ENCODE measurements at regions of chr17 and their contacts with region 1.

Region 1: GRCh38 chr17:41548844-41549595 is 20.9 kb upstream of the KRT19 start:
- DNase-seq: peak; percentile 91
- ATAC-seq: peak; percentile 89
- H3K4me3 Mint-ChIP-seq: peak overlapping the region; percentile 47; the same call in 1 of the 2 replicates
- H3K27ac Mint-ChIP-seq: 0 out of 2 replicates have a peak overlapping the region, but pooled peaks have one; percentile 65
- H3K4me1 Mint-ChIP-seq: peaks cover 26% of the 10 kb centered on the region
- H3K27me3 Mint-ChIP-seq: peaks cover 5% of the 10 kb centered on the region
- CTCF ChIP-seq: peak; percentile 80

Region 2: GRCh38 chr17:40763752-40764151 is 785.3 kb before region 1 on chr17:
- CTCF ChIA-PET with region 1: no interaction called
- POLR2A ChIA-PET with region 1: no interaction called
- DNase-seq: no peak
- ATAC-seq: no peak
- H3K4me3 Mint-ChIP-seq: no peak overlapping the region
- H3K27ac Mint-ChIP-seq: no peak overlapping the region
- H3K4me1 Mint-ChIP-seq: no peaks in the 10 kb centered on the region
- H3K27me3 Mint-ChIP-seq: peaks cover 3% of the 10 kb centered on the region; the same call in 1 of the 2 replicates
- CTCF ChIP-seq: no peak

Region 3: GRCh38 chr17:41403798-41404671 is 145.0 kb before region 1 on chr17:
- CTCF ChIA-PET with region 1: interaction called, 17 read pairs
- POLR2A ChIA-PET with region 1: no interaction called
- DNase-seq: no peak
- ATAC-seq: no peak
- H3K4me3 Mint-ChIP-seq: no peak overlapping the region
- H3K27ac Mint-ChIP-seq: no peak overlapping the region
- H3K4me1 Mint-ChIP-seq: no peaks in the 10 kb centered on the region
- H3K27me3 Mint-ChIP-seq: no peaks in the 10 kb centered on the region; the same call in none of the 2 replicates
- CTCF ChIP-seq: no peak

Region 4: DNA sequence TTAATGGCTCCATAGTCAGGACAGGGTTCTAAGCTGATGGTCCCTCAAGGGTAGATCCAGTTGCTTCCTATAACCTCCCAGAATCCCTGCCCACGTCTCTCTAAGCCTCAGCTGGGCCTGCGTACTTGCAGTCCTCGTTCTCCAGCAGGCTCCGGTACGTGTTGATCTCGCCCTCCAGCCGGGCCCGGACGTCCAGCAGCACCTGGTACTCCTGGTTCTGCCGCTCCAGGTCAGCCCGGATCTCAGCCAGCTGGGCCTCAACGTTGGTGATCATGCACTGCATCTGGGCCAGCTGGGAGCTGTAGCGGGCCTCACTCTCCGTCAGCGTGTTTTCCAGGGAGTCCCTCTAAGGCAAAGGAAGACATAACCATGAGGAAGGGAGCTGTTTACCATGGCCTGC is 86.3 kb before region 1 on chr17:
- CTCF ChIA-PET with region 1: interaction called, 17 read pairs
- POLR2A ChIA-PET with region 1: no interaction called
- DNase-seq: no peak
- ATAC-seq: no peak
- H3K4me3 Mint-ChIP-seq: no peak overlapping the region
- H3K27ac Mint-ChIP-seq: no peak overlapping the region
- H3K4me1 Mint-ChIP-seq: no peaks in the 10 kb centered on the region
- H3K27me3 Mint-ChIP-seq: peaks cover 5% of the 10 kb centered on the region
- CTCF ChIP-seq: no peak

Region 5: GRCh38 chr17:41538565-41538991 is 10.4 kb before region 1 on chr17:
- CTCF ChIA-PET with region 1: interaction called, 122 read pairs
- POLR2A ChIA-PET with region 1: interaction called, 3 read pairs
- DNase-seq: no peak
- ATAC-seq: peak; percentile 38
- H3K4me3 Mint-ChIP-seq: no peak overlapping the region; the same call in 1 of the 2 replicates
- H3K27ac Mint-ChIP-seq: no peak overlapping the region
- H3K4me1 Mint-ChIP-seq: peaks cover 48% of the 10 kb centered on the region
- H3K27me3 Mint-ChIP-seq: no peaks in the 10 kb centered on the region
- CTCF ChIP-seq: no peak

Region 6: DNA sequence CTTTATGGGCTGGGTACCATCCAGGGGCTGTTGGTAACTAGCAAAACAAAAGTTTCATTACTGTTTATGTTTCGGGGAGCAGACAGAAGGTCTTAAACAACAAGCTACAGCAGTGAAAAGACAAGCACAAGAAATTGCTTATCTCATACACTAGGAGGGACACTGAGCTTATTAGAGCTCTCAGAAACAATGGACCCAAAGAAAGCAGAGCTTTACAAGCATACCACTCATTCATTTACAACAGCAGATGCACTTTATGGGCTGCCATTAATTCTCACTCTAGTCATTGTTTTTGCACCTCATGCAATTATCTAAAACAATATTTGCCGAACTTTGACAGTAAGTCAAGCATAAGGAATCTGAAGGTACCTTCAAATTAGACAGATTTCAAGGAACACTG is 53.5 kb after region 1 on chr17:
- CTCF ChIA-PET with region 1: interaction called, 10 read pairs
- POLR2A ChIA-PET with region 1: no interaction called
- DNase-seq: no peak
- ATAC-seq: no peak
- H3K4me3 Mint-ChIP-seq: no peak overlapping the region
- H3K27ac Mint-ChIP-seq: no peak overlapping the region
- H3K4me1 Mint-ChIP-seq: 0 out of 2 replicates have a peak, but pooled peaks cover 3% of the 10 kb centered on the region
- H3K27me3 Mint-ChIP-seq: peaks cover 8% of the 10 kb centered on the region; the same call in 1 of the 2 replicates
- CTCF ChIP-seq: no peak

Region 7: DNA sequence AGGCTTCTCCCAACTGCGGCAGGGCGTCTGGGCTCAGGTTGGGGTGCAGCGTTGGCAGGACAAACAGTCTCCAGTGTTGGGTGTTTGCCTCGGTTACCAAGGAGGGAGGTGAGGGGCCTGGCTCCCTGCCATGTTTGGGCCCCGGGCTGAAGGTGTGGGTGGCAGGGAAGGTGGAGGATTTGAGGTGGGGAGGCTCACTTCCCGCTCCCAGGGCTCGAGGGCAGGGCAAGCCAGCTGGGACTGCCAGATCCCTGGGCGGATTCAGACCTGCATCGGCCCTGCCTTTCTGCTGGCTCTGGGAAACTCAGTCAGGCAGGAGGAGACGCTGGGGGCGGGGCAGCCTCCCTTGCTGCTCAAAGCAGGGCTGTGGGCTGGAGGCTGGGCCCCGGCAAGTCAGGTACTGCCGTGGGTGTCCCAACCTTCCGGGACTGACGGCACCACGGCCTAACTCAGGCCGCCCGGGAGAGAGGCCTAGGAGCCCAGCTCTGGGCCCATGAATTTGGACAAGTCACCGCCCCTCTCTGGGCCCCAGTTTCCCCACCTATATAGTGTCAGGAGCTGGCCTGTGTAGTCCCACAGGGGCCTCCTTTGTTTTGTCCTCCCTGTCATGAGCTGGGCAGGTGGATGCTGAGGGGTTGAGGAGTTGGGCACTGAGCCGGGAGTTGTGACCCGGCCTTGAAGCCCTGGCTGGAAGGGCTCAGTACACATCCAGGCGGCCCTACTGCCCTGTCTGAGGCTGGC is 106.8 kb after region 1 on chr17:
- CTCF ChIA-PET with region 1: interaction called, 380 read pairs
- POLR2A ChIA-PET with region 1: no interaction called
- DNase-seq: peak; percentile 76
- ATAC-seq: peak; percentile 78
- H3K4me3 Mint-ChIP-seq: no peak overlapping the region
- H3K27ac Mint-ChIP-seq: no peak overlapping the region
- H3K4me1 Mint-ChIP-seq: peaks cover 11% of the 10 kb centered on the region
- H3K27me3 Mint-ChIP-seq: no peaks in the 10 kb centered on the region
- CTCF ChIP-seq: no peak

Region 8: DNA sequence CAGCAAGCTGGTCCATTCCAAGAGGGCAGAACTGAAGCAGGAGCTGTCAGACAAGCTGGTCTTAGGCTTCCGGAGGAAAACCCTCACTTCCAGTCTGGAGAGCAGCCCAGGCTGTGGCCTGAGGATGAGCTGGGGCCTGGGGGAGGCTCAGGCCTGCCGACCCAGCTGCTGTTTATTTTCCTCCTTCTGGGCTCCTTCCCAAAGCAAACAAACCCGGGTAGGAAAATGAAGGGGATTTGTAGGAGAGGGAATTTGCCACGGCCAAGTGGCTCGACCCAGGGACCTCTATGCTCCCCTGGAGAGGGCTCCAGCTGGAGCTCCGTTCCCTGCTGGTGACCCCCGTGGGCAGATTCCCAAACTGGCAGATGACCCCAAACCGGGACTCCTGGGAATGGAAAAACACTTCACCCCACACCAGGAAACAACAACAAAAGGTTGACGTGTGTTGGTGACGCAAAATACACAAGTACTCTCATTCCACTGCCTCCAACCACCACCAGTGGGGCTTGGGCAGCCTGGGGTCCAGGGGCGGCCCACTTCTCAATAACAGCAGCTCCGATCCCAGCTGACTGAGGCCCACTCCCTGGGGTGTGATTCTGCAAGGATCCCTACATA is 228.7 kb after region 1 on chr17:
- CTCF ChIA-PET with region 1: no interaction called
- POLR2A ChIA-PET with region 1: no interaction called
- DNase-seq: no peak
- ATAC-seq: no peak
- H3K4me3 Mint-ChIP-seq: no peak overlapping the region
- H3K27ac Mint-ChIP-seq: peak overlapping the region; percentile 70; the same call in 1 of the 2 replicates
- H3K4me1 Mint-ChIP-seq: peaks cover 64% of the 10 kb centered on the region
- H3K27me3 Mint-ChIP-seq: no peaks in the 10 kb centered on the region
- CTCF ChIP-seq: no peak

Measured in WTC11 (cell line).